Activated CD8-positive, alpha-beta T cell treated with anti-CD3 and anti-CD28 coated beads for 36 hours (primary cell): ENCODE measurements at regions of chr11 and their contacts with region 1.

Region 1: GRCh38 chr11:128522055-128522942 is 65.1 kb downstream of the ETS1 start:
- DNase-seq: peak; percentile 92
- ATAC-seq: peak; percentile 77
- H3K4me3 Mint-ChIP-seq: peak overlapping the region; percentile 95
- H3K27ac Mint-ChIP-seq: peak overlapping the region; percentile 96
- H3K4me1 Mint-ChIP-seq: peaks cover 37% of the 10 kb centered on the region
- H3K27me3 Mint-ChIP-seq: no peaks in the 10 kb centered on the region
- CTCF ChIP-seq: no peak

Region 2: DNA sequence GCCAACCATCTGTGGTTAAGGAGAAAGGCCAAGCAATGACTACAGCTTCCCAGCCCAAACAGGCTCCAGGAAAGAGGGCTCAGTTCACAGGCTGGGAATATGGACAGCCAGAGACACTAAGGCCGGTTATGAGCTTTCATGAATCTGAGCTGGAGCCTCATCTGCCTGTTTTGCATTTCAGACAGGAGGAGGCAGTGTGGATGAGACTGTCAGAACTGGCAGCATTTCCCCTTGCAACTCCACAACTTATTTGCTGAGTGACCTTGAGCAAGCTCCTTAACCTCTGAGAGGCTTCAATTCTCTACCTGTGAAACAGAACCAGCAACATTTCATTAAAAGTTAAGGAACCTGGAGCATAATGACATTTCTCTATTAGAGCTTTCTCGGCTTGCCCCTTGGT is 198.9 kb before region 1 on chr11:
- CTCF ChIA-PET with region 1: interaction called, 4 read pairs
- POLR2A ChIA-PET with region 1: interaction called, 6 read pairs
- intact Hi-C with region 1: loop called (anchors 5 kb)
- DNase-seq: peak; percentile 61
- ATAC-seq: no peak
- H3K4me3 Mint-ChIP-seq: peak overlapping the region; percentile 70
- H3K27ac Mint-ChIP-seq: peak overlapping the region; percentile 98
- H3K4me1 Mint-ChIP-seq: peaks cover 85% of the 10 kb centered on the region
- H3K27me3 Mint-ChIP-seq: no peaks in the 10 kb centered on the region
- CTCF ChIP-seq: peak; percentile 70

Region 3: DNA sequence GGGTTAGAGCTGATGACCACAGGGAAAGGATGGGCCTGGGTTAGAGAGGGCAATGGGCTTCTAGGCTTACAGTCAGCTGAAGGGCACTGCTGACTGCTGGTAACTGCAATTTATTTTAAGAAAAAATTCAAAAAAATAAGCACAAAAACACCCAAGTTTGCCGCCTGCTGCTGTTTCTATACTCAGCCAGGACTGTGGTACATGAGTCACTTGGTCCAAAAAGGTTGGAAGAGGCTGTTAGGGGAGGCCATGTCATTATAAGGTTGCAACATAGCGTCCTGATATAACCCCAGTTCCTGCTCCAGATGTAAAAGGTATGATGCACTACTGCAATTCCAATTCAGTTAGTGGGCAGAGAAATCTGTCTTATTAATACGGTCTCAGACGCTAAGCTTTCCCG is 33.8 kb before region 1 on chr11:
- CTCF ChIA-PET with region 1: interaction called, 6 read pairs
- POLR2A ChIA-PET with region 1: interaction called, 72 read pairs
- intact Hi-C with region 1: no loop called
- DNase-seq: peak; percentile 69
- ATAC-seq: peak; percentile 63
- H3K4me3 Mint-ChIP-seq: peak overlapping the region; percentile 47
- H3K27ac Mint-ChIP-seq: peak overlapping the region; percentile 98
- H3K4me1 Mint-ChIP-seq: peaks cover 94% of the 10 kb centered on the region
- H3K27me3 Mint-ChIP-seq: no peaks in the 10 kb centered on the region
- CTCF ChIP-seq: no peak

Region 4: GRCh38 chr11:128535468-128536457 is 13.5 kb after region 1 on chr11:
- CTCF ChIA-PET with region 1: interaction called, 10 read pairs
- POLR2A ChIA-PET with region 1: interaction called, 661 read pairs
- intact Hi-C with region 1: no loop called
- DNase-seq: no peak
- ATAC-seq: no peak
- H3K4me3 Mint-ChIP-seq: no peak overlapping the region
- H3K27ac Mint-ChIP-seq: no peak overlapping the region
- H3K4me1 Mint-ChIP-seq: peaks cover 14% of the 10 kb centered on the region
- H3K27me3 Mint-ChIP-seq: no peaks in the 10 kb centered on the region
- CTCF ChIP-seq: no peak

Region 5: DNA sequence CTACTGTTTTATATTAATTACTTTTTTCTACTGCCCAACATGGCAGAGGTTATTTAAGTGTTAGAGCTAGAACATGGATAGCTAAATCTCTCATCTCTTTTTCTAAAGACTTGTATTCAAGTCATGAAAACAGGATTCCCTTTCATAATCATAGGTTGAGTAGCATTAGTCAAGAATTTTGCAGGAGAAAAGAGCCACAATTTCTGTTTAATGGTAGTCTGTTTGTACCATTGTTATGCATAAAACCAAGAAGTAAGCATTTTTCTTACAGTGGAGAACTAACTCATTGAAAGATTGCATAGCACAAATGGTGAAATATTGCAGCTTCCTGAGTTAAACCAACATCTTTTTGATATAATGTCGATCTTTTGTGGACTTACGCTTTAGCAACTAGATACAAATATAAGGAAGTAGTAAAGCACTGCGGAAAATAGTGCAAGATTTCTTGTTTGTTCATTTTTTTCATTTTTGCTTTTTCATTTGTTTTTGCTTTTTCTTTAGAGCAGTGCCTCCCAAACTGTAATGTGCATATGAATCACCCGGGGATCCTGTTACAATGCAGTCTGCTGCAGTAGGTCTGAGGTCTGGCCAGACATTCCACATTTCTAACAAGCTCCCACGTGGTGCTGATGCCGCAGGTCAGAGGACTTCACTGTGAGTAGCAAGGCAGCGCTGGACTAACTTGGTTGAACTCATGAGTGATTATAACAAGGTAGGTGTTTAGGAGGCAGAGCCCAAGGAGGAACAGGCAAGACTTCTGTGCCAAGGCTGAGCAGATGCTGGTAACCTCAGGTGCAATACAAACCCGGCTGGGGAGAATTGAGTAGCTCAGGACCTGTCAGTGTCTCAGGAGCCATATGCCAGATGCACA is 60.4 kb after region 1 on chr11:
- CTCF ChIA-PET with region 1: interaction called, 3 read pairs
- POLR2A ChIA-PET with region 1: interaction called, 10 read pairs
- intact Hi-C with region 1: loop called (anchors 5 kb)
- DNase-seq: peak; percentile 35
- ATAC-seq: no peak
- H3K4me3 Mint-ChIP-seq: peak overlapping the region; percentile 55
- H3K27ac Mint-ChIP-seq: peak overlapping the region; percentile 72
- H3K4me1 Mint-ChIP-seq: peaks cover 47% of the 10 kb centered on the region
- H3K27me3 Mint-ChIP-seq: no peaks in the 10 kb centered on the region
- CTCF ChIP-seq: no peak

Region 6: GRCh38 chr11:128831174-128832120 is 309.1 kb after region 1 on chr11:
- CTCF ChIA-PET with region 1: interaction called, 10 read pairs
- POLR2A ChIA-PET with region 1: no interaction called
- intact Hi-C with region 1: no loop called
- DNase-seq: peak; percentile 92
- ATAC-seq: peak; percentile 85
- H3K4me3 Mint-ChIP-seq: peak overlapping the region; percentile 52
- H3K27ac Mint-ChIP-seq: peak overlapping the region; percentile 92
- H3K4me1 Mint-ChIP-seq: peaks cover 26% of the 10 kb centered on the region
- H3K27me3 Mint-ChIP-seq: no peaks in the 10 kb centered on the region
- CTCF ChIP-seq: peak; percentile 82